Heart left ventricle (tissue), 16 donors: ENCODE measurements at regions of chr7 and their contacts with region 1.

Region 1: GRCh38 chr7:123367484-123368122 is 166.8 kb downstream of the IQUB start:
- DNase-seq: no peak
- ATAC-seq: no peak
- H3K4me3 ChIP-seq: no peak overlapping the region
- H3K27ac ChIP-seq: no peak overlapping the region
- H3K4me1 ChIP-seq: no peaks in the 10 kb centered on the region
- H3K27me3 ChIP-seq: no peaks in the 10 kb centered on the region
- CTCF ChIP-seq: peak; percentile 45 to 71 (median 62)
- POLR2A ChIP-seq: no peak

Region 2: DNA sequence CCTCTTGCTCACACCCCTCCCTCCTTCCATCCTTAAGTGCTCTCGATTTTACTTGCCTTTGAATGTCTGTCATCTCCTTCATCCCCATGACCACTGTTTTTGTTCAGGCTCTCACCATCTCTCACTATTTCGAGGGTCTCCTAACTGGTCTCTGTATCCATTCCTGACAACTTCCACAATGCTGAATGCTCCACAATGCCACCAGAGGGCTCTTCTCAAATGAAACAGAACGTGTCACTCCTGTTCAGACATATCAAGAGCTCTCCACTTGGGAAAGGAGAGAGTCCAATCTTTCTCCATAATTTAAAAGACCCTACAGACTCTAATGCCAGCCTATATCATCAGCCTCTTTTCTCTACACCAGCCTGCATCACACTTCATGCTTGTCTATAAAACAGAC is 158.8 kb before region 1 on chr7:
- intact Hi-C with region 1: loop called in 3 of 10 experiments (anchors 5 to 10 kb)
- DNase-seq: no peak
- ATAC-seq: peak in 1 of 4 donors; percentile 13
- H3K4me3 ChIP-seq: no peak overlapping the region
- H3K27ac ChIP-seq: no peak overlapping the region
- H3K4me1 ChIP-seq: peaks cover 0 to 7% (median 0%) of the 10 kb centered on the region in 12 donors
- H3K27me3 ChIP-seq: no peaks in the 10 kb centered on the region
- CTCF ChIP-seq: peak in 8 of 12 donors; percentile 10 to 46 (median 23)
- POLR2A ChIP-seq: no peak

Region 3: GRCh38 chr7:123285076-123285732 is 82.4 kb before region 1 on chr7:
- intact Hi-C with region 1: no loop called
- DNase-seq: no peak
- ATAC-seq: no peak
- H3K4me3 ChIP-seq: no peak overlapping the region
- H3K27ac ChIP-seq: no peak overlapping the region
- H3K4me1 ChIP-seq: no peaks in the 10 kb centered on the region
- H3K27me3 ChIP-seq: no peaks in the 10 kb centered on the region
- CTCF ChIP-seq: no peak
- POLR2A ChIP-seq: no peak

Region 4: GRCh38 chr7:123338688-123339087 is 28.9 kb before region 1 on chr7:
- intact Hi-C with region 1: loop called in 1 of 10 experiments (anchors 2 kb)
- DNase-seq: no peak
- ATAC-seq: no peak
- H3K4me3 ChIP-seq: no peak overlapping the region
- H3K27ac ChIP-seq: no peak overlapping the region
- H3K4me1 ChIP-seq: no peaks in the 10 kb centered on the region
- H3K27me3 ChIP-seq: no peaks in the 10 kb centered on the region
- CTCF ChIP-seq: no peak
- POLR2A ChIP-seq: no peak